AG04450 (cell line): ENCODE measurements at regions of chrX and their contacts with region 1.

Region 1: DNA sequence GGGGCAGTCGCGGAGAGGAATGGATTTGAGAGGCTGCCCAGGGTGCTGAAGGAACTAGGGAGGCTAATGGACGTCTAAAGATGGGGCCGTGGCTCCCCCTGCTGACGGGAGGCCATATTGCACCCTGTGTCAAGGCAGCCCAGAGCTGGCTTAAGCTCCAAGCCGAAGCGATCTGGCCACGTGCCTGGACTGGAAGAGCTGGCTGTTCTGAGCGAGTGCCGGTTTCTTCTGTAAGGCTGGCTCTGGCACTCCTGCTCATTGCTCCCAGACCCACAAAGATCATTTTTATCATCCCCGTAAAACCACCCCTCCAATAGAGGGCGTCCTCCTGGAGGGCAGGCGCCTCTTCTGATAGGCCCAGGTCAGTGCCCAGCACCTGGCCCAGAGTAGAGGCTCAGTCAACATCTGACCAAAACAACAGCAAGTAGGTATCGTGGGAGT is 5.6 kb downstream of the PNCK start:
- DNase-seq: peak; percentile 30
- H3K4me3 ChIP-seq: peak overlapping the region; percentile 20; the same call in 1 of the 2 replicates
- H3K27ac ChIP-seq: no peak overlapping the region
- H3K27me3 ChIP-seq: peaks cover 11% of the 10 kb centered on the region
- CTCF ChIP-seq: peak; percentile 72

Region 2: GRCh38 chrX:152941328-152942106 is 726.5 kb before region 1 on chrX:
- CTCF ChIA-PET with region 1: interaction called, 26 read pairs
- POLR2A ChIA-PET with region 1: no interaction called
- DNase-seq: peak; percentile 77
- H3K4me3 ChIP-seq: peak overlapping the region; percentile 72
- H3K27ac ChIP-seq: peak overlapping the region; percentile 21
- H3K27me3 ChIP-seq: no peaks in the 10 kb centered on the region
- CTCF ChIP-seq: peak; percentile 59

Region 3: GRCh38 chrX:153554519-153555167 is 113.3 kb before region 1 on chrX:
- CTCF ChIA-PET with region 1: interaction called, 17 read pairs
- POLR2A ChIA-PET with region 1: no interaction called
- DNase-seq: peak; percentile 13
- H3K4me3 ChIP-seq: no peak overlapping the region
- H3K27ac ChIP-seq: no peak overlapping the region
- H3K27me3 ChIP-seq: peaks cover 11% of the 10 kb centered on the region
- CTCF ChIP-seq: peak; percentile 64

Region 4: GRCh38 chrX:153609917-153610428 is 58.0 kb before region 1 on chrX:
- CTCF ChIA-PET with region 1: interaction called, 55 read pairs
- POLR2A ChIA-PET with region 1: no interaction called
- DNase-seq: peak; percentile 18
- H3K4me3 ChIP-seq: peak overlapping the region; percentile 45
- H3K27ac ChIP-seq: no peak overlapping the region
- H3K27me3 ChIP-seq: peaks cover 16% of the 10 kb centered on the region
- CTCF ChIP-seq: peak; percentile 63

Region 5: DNA sequence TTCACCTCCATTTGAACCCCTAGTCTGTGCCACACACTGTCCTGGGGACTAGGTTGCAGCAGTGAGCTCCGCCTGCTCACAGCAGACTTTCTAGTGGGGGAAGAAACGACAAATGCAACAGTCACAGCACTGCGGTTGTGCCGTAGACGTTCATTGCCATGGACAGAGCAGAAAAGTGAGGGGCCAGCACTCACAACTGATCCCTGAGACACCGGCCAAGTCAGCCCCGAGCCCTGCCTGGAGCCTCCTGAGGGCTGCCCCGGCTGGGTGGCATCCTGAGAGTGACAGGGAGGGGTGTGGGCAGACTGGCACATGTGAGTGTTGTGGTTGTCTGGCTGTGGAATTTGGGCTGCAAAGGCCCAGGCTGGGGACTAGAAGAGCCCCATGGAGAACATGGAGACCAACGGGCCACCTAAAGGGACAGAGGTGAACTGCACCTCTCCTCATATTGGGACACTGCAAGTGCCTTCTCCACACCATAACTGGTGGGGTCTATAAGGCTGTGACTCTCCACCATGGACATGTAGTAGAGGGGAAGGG is 16.4 kb before region 1 on chrX:
- CTCF ChIA-PET with region 1: interaction called, 23 read pairs
- POLR2A ChIA-PET with region 1: no interaction called
- DNase-seq: no peak
- H3K4me3 ChIP-seq: no peak overlapping the region
- H3K27ac ChIP-seq: no peak overlapping the region
- H3K27me3 ChIP-seq: peaks cover 15% of the 10 kb centered on the region
- CTCF ChIP-seq: 0 out of 2 replicates have a peak, but pooled peaks have one; percentile 19

Region 6: DNA sequence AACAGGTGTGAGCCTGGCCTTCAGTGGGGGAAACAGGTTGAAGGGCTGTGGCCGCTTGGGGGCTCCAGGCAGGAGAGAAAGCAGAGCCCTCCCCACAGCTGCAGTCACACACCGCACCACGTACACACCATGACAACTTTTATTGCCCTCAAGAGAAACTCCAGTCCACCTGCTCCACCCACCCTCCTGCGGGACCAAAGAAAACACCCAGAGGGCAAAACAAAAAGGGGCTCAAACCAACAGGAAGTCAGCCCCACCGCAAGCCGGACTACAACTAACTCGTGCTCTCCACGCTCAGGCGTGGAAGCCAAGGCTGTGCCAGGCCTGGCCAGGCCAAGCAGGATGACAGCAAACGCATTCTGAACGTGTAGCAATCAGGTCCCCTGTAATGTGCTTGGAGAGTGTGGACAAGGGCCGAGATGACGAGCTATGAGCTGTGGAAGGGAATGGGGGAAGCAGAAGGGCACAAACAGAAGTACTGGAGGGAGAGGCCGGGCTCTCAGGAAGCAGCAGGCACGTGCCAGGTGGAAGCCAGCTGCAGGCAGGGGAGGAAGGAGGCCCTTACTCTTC is 32.5 kb after region 1 on chrX:
- CTCF ChIA-PET with region 1: no interaction called
- POLR2A ChIA-PET with region 1: no interaction called
- DNase-seq: no peak
- H3K4me3 ChIP-seq: no peak overlapping the region
- H3K27ac ChIP-seq: no peak overlapping the region
- H3K27me3 ChIP-seq: no peaks in the 10 kb centered on the region
- CTCF ChIP-seq: no peak